ENCODE measurements at regions of chr11 and their contacts with region 1.

Region 1: GRCh38 chr11:82900277-82901164 is at the start of gene PRCP:
- DNase-seq: peak; percentile 94
- ATAC-seq: peak; percentile 73
- H3K4me3 ChIP-seq: peak within 1 kb of the TSS; percentile 54 to 97 (median 93)
- H3K4me3 Mint-ChIP-seq: peak within 1 kb of the TSS; percentile 100
- H3K27ac ChIP-seq: peak within 1 kb of the TSS; percentile 94 to 95
- H3K27ac Mint-ChIP-seq: peak within 1 kb of the TSS; percentile 99
- H3K4me1 ChIP-seq: peaks cover 46 to 50% of the 10 kb centered on the region in 2 donors
- H3K4me1 Mint-ChIP-seq: peaks cover 52% of the 10 kb centered on the region
- H3K27me3 ChIP-seq: no peaks in the 10 kb centered on the region
- H3K27me3 Mint-ChIP-seq: no peaks in the 10 kb centered on the region
- CTCF ChIP-seq: no peak
- total RNA-seq, gene PRCP: 37.7 and 45.2 TPM in 2 replicates

Region 2: GRCh38 chr11:82586581-82586980 is 313.9 kb before region 1 on chr11:
- CTCF ChIA-PET with region 1: no interaction called
- POLR2A ChIA-PET with region 1: no interaction called
- intact Hi-C with region 1: no loop called
- DNase-seq: no peak
- ATAC-seq: no peak
- H3K4me3 ChIP-seq: no peak overlapping the region
- H3K4me3 Mint-ChIP-seq: no peak overlapping the region
- H3K27ac ChIP-seq: no peak overlapping the region
- H3K27ac Mint-ChIP-seq: no peak overlapping the region
- H3K4me1 ChIP-seq: no peaks in the 10 kb centered on the region
- H3K4me1 Mint-ChIP-seq: no peaks in the 10 kb centered on the region
- H3K27me3 ChIP-seq: no peaks in the 10 kb centered on the region
- H3K27me3 Mint-ChIP-seq: no peaks in the 10 kb centered on the region
- CTCF ChIP-seq: no peak

Region 3: DNA sequence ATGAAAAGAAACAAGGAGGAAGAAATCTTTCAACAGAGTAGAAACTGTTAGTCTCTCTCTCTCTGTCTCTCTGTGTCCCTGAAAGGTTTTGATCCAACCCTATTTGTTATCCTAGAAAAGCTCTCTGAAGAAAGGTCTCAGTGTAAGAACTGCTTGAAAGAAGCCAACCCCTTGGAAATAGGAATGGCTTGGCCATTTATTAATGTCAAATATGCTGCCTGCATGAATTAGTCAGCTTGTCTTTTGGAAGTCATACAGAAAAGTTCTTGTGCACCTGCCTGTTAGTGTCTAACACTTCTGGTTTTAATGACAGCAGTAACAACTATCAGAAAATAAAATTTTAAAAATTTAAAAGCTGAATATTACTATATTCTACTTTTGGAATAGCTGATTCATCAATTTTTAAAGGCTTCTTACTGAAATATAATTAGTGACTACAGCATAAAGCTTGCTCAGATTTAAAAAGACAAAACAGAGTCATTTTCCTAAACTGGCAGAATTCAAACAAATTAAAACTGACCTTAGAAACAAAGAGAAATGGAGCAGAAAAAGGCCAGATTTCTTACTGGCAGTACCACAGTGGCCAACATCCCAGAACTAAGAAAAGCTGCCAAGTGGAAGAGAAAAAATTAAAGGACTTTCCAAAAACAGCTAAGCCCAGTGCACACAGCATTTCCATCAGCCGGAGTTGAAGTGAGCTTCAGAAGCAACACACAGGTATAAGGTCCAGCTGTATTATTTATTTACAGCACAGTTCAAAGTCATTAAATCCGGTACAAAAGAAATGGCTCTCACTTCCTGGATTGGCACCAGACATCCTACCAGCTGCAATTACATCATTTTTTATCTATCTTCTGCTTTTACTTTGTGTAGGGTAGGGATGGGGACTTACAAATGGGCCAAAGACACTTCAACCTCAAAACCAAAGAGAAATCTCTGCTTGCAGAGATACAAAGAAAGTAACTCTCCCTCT is 76.6 kb before region 1 on chr11:
- CTCF ChIA-PET with region 1: no interaction called
- POLR2A ChIA-PET with region 1: no interaction called
- intact Hi-C with region 1: no loop called
- DNase-seq: no peak
- ATAC-seq: no peak
- H3K4me3 ChIP-seq: no peak overlapping the region
- H3K4me3 Mint-ChIP-seq: no peak overlapping the region
- H3K27ac ChIP-seq: no peak overlapping the region
- H3K27ac Mint-ChIP-seq: no peak overlapping the region
- H3K4me1 ChIP-seq: no peaks in the 10 kb centered on the region
- H3K4me1 Mint-ChIP-seq: peaks cover 2% of the 10 kb centered on the region
- H3K27me3 ChIP-seq: no peaks in the 10 kb centered on the region
- H3K27me3 Mint-ChIP-seq: no peaks in the 10 kb centered on the region
- CTCF ChIP-seq: no peak

Region 4: GRCh38 chr11:82927254-82927880 is 26.8 kb after region 1 on chr11:
- CTCF ChIA-PET with region 1: interaction called, 19 read pairs
- POLR2A ChIA-PET with region 1: interaction called, 4 read pairs
- intact Hi-C with region 1: loop called (anchors 1 kb)
- DNase-seq: peak; percentile 76
- ATAC-seq: peak; percentile 81
- H3K4me3 ChIP-seq: no peak overlapping the region
- H3K4me3 Mint-ChIP-seq: peak overlapping the region; percentile 15
- H3K27ac ChIP-seq: no peak overlapping the region
- H3K27ac Mint-ChIP-seq: no peak overlapping the region
- H3K4me1 ChIP-seq: peaks cover 58 to 77% of the 10 kb centered on the region in 2 donors
- H3K4me1 Mint-ChIP-seq: peaks cover 67% of the 10 kb centered on the region
- H3K27me3 ChIP-seq: no peaks in the 10 kb centered on the region
- H3K27me3 Mint-ChIP-seq: no peaks in the 10 kb centered on the region
- CTCF ChIP-seq: peak; percentile 89

Region 5: DNA sequence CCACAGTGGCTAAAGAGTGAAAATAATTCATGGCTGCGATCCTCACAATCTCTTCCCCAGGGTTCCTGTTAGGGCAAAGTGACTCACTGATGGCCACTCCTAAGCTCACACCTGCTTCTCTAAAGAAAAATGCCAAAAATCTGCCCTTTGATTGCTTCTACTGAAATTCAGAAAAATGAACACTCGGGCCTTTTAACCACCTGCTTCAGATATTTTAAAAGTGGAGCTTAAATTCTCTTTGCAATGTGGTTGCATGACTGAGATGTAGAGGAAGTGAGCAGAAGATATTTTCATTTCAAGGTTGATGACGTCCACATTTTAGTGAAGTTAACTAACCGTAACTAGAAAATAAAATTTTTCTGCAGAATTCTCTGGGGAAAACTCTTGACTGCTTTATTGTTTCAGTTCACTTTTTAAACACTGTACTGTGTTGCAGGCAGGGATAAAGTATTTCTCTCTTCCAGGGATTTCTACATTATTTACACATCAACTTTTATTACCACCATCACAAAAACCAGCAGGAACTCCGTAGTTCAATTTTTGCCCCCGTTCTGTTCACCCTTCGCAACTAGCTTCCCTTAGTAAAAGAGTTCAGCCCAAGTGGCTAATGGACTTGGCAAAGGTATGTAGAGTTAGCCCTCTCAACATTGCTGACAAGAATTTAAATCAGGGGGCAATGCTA is 162.7 kb after region 1 on chr11:
- CTCF ChIA-PET with region 1: interaction called, 7 read pairs
- POLR2A ChIA-PET with region 1: interaction called, 6 read pairs
- intact Hi-C with region 1: loop called (anchors 1 kb)
- DNase-seq: peak; percentile 91
- ATAC-seq: peak; percentile 68
- H3K4me3 ChIP-seq: peak overlapping the region; percentile 35 to 62 (median 51)
- H3K4me3 Mint-ChIP-seq: peak overlapping the region; percentile 89
- H3K27ac ChIP-seq: peak overlapping the region; percentile 86 to 94
- H3K27ac Mint-ChIP-seq: peak overlapping the region; percentile 98
- H3K4me1 ChIP-seq: peaks cover 92 to 95% of the 10 kb centered on the region in 2 donors
- H3K4me1 Mint-ChIP-seq: peaks cover 85% of the 10 kb centered on the region
- H3K27me3 ChIP-seq: no peaks in the 10 kb centered on the region
- H3K27me3 Mint-ChIP-seq: no peaks in the 10 kb centered on the region
- CTCF ChIP-seq: no peak

Region 6: GRCh38 chr11:83193315-83194280 is 293.1 kb after region 1 on chr11 and contains the start of gene ANKRD42:
- CTCF ChIA-PET with region 1: no interaction called
- POLR2A ChIA-PET with region 1: interaction called, 3 read pairs
- intact Hi-C with region 1: loop called (anchors 1 kb)
- DNase-seq: peak; percentile 95
- ATAC-seq: peak; percentile 72
- H3K4me3 ChIP-seq: peak within 1 kb of the TSS; percentile 58 to 99 (median 96)
- H3K4me3 Mint-ChIP-seq: peak within 1 kb of the TSS; percentile 98
- H3K27ac ChIP-seq: peak within 1 kb of the TSS; percentile 93 to 96
- H3K27ac Mint-ChIP-seq: peak within 1 kb of the TSS; percentile 97
- H3K4me1 ChIP-seq: peaks cover 22 to 29% of the 10 kb centered on the region in 2 donors
- H3K4me1 Mint-ChIP-seq: peaks cover 49% of the 10 kb centered on the region
- H3K27me3 ChIP-seq: no peaks in the 10 kb centered on the region
- H3K27me3 Mint-ChIP-seq: no peaks in the 10 kb centered on the region
- CTCF ChIP-seq: no peak
- total RNA-seq, gene ANKRD42: 13.3 and 14.5 TPM in 2 replicates

Region 7: GRCh38 chr11:83249972-83250593 is 349.6 kb after region 1 on chr11:
- CTCF ChIA-PET with region 1: interaction called, 135 read pairs
- POLR2A ChIA-PET with region 1: no interaction called
- intact Hi-C with region 1: no loop called
- DNase-seq: peak; percentile 62
- ATAC-seq: peak; percentile 63
- H3K4me3 ChIP-seq: no peak overlapping the region
- H3K4me3 Mint-ChIP-seq: no peak overlapping the region
- H3K27ac ChIP-seq: no peak overlapping the region
- H3K27ac Mint-ChIP-seq: no peak overlapping the region
- H3K4me1 ChIP-seq: peaks cover 4 to 6% of the 10 kb centered on the region in 2 donors
- H3K4me1 Mint-ChIP-seq: peaks cover 14% of the 10 kb centered on the region
- H3K27me3 ChIP-seq: no peaks in the 10 kb centered on the region
- H3K27me3 Mint-ChIP-seq: no peaks in the 10 kb centered on the region
- CTCF ChIP-seq: peak; percentile 83

Region 8: DNA sequence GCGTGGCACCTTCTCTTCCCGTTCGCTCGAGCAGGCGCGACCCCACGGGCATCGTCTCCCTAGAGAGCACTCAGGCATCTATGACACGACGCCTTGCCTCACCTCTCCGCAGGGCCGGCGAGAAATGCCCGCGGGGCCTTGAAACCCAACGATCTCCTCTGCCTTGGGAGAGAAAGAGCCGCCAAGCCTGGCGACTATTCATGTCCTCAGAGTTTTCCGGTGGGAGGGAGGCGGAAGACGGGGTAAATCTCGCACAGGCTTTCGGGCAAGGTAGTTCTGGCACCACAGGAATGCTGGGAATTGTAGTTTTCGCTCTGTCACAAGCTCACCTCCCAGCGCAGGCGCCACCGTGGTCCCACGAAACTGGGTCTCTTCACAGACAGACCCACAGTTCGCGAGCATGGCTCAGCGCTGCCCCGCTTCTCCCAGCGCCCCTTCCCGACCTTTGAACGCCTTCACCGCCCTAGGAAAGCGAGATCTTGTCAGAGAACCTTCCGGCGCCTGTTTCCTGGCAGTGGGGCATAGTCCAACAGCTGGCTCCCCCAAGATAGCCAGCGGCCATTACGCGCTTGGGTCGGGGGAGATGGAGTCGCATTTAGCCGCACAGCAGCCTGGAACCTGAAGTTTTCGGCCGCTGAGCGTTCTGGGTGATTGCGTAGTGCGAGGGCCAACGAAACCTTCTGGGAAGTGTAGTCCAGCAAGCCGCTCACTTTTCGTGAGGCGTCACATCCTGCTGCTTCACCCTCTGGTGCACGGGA is 385.4 kb after region 1 on chr11 and contains the start of gene CCDC90B:
- CTCF ChIA-PET with region 1: no interaction called
- POLR2A ChIA-PET with region 1: interaction called, 15 read pairs
- intact Hi-C with region 1: loop called (anchors 1 kb)
- DNase-seq: peak; percentile 97
- ATAC-seq: peak; percentile 86
- H3K4me3 ChIP-seq: peak within 1 kb of the TSS; percentile 77 to 97 (median 91)
- H3K4me3 Mint-ChIP-seq: peak within 1 kb of the TSS; percentile 97
- H3K27ac ChIP-seq: peak within 1 kb of the TSS; percentile 92 to 96
- H3K27ac Mint-ChIP-seq: peak within 1 kb of the TSS; percentile 99
- H3K4me1 ChIP-seq: peaks cover 40 to 47% of the 10 kb centered on the region in 2 donors
- H3K4me1 Mint-ChIP-seq: peaks cover 59% of the 10 kb centered on the region
- H3K27me3 ChIP-seq: no peaks in the 10 kb centered on the region
- H3K27me3 Mint-ChIP-seq: no peaks in the 10 kb centered on the region
- CTCF ChIP-seq: no peak
- total RNA-seq, gene CCDC90B: 35.2 and 39.1 TPM in 2 replicates

Measured in B cell (primary cell).